ENCODE measurements at regions of chr6 and their contacts with region 1.

Region 1: DNA sequence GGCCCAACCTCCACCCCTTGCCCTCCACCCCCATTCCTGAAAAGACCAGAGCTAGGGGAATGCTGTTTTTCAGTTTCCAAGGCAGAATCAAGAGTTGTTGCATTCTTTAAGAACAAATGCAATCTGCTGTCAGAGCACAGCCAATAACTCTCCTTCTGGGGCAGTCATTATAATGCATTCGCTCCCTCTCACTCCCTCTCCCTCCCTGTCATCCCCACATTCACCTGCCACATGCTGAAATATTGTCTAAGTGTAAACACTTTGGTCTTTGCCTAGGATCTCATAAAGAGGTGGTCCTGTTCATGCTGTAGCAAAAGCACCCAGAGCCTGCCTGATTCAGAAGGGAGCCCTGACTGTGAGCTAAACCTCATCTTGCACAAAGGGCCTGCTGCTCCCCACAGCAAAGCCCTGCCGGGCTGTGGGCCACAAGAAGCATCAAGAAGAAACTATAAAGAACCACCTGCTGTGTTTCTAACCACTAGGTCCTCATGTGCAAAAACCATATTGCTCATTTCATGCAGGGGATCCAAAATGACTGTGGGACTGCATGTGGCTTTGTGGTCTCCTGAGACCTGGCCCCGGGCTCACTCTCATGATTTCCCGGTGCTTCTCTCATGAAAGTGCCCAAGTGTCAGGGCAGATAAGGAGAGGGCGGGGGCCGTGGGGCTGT is 85.6 kb downstream of the GPR6 start:
- DNase-seq: no peak
- H3K4me3 ChIP-seq: no peak overlapping the region
- H3K27ac ChIP-seq: no peak overlapping the region
- H3K4me1 ChIP-seq: no peaks in the 10 kb centered on the region
- H3K27me3 ChIP-seq: peaks cover 23 to 33% of the 10 kb centered on the region in 2 experiments
- CTCF ChIP-seq: no peak
- POLR2A ChIP-seq: no peak

Region 2: DNA sequence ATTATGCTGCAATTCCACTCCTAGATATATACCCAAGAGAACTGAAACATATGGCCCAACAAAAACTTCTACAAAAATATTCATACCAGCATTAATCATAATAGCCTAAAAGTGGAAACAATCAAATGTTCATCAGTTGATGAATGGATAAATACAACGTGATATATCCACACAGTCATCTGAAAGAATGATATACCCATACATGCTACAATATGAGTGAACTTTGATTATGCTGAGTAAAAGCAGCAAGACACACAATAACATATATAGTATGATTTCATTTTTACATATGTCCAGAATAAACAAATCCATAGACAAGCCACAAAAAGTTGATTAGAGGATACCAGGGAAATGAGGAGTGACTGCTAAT is 720.9 kb after region 1 on chr6:
- CTCF ChIA-PET with region 1: no interaction called
- POLR2A ChIA-PET with region 1: no interaction called
- dilution Hi-C with region 1: no loop called
- intact Hi-C with region 1: loop called (anchors 5 kb)
- DNase-seq: no peak
- H3K4me3 ChIP-seq: no peak overlapping the region
- H3K27ac ChIP-seq: no peak overlapping the region
- H3K4me1 ChIP-seq: no peaks in the 10 kb centered on the region
- H3K27me3 ChIP-seq: peaks cover 0 to 2% of the 10 kb centered on the region in 2 experiments
- CTCF ChIP-seq: no peak
- POLR2A ChIP-seq: no peak